ENCODE measurements at regions of chr3 and their contacts with region 1.

Region 1: DNA sequence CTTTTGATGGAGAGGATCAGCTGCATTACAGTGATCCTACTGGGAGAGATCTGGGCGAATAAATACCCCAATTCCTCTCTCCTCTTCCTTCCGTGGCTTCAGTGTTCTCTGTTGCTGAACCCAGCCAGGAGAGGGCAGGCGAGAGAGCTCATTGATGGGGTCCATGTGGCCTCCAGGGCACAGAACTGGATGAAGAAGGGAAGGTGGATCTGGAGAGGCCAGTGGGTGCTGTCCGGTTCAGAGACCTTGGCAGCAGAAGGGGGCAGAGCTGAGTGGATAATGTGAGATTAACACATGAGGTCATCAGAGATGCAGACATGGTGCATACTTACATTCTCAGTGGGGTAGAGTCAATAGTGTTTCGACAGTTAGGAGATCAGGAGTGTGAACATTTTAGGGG is 193.6 kb downstream of the CLSTN2 start:
- DNase-seq: no peak
- H3K4me3 ChIP-seq: no peak overlapping the region
- H3K27ac ChIP-seq: no peak overlapping the region
- H3K27me3 ChIP-seq: no peaks in the 10 kb centered on the region
- CTCF ChIP-seq: peak; percentile 57

Region 2: GRCh38 chr3:139519998-139520737 is 608.5 kb before region 1 on chr3:
- CTCF ChIA-PET with region 1: no interaction called
- POLR2A ChIA-PET with region 1: no interaction called
- DNase-seq: no peak
- H3K4me3 ChIP-seq: no peak overlapping the region
- H3K27ac ChIP-seq: no peak overlapping the region
- H3K27me3 ChIP-seq: no peaks in the 10 kb centered on the region
- CTCF ChIP-seq: peak; percentile 41

Region 3: GRCh38 chr3:140863580-140864009 is 735.0 kb after region 1 on chr3:
- CTCF ChIA-PET with region 1: interaction called, 21 read pairs
- POLR2A ChIA-PET with region 1: no interaction called
- DNase-seq: no peak
- H3K4me3 ChIP-seq: no peak overlapping the region
- H3K27ac ChIP-seq: no peak overlapping the region
- H3K27me3 ChIP-seq: no peaks in the 10 kb centered on the region
- CTCF ChIP-seq: peak; percentile 52